ENCODE measurements at regions of chr6 and their contacts with region 1.

Region 1: GRCh38 chr6:291697-292505 is at the start of gene DUSP22:
- DNase-seq: peak; percentile 50 to 95 (median 81)
- ATAC-seq: peak; percentile 55
- H3K4me3 ChIP-seq: peak within 1 kb of the TSS; percentile 64 to 65
- H3K4me3 Mint-ChIP-seq: peak within 1 kb of the TSS; percentile 95
- H3K27ac ChIP-seq: peak within 1 kb of the TSS; percentile 55 to 85
- H3K27ac Mint-ChIP-seq: peak within 1 kb of the TSS; percentile 98
- H3K4me1 ChIP-seq: peaks cover 26% of the 10 kb centered on the region
- H3K4me1 Mint-ChIP-seq: peaks cover 51% of the 10 kb centered on the region
- H3K27me3 ChIP-seq: no peaks in the 10 kb centered on the region
- H3K27me3 Mint-ChIP-seq: no peaks in the 10 kb centered on the region
- CTCF ChIP-seq: no peak
- total RNA-seq, gene DUSP22: 19.9 to 22.1 TPM

Region 2: DNA sequence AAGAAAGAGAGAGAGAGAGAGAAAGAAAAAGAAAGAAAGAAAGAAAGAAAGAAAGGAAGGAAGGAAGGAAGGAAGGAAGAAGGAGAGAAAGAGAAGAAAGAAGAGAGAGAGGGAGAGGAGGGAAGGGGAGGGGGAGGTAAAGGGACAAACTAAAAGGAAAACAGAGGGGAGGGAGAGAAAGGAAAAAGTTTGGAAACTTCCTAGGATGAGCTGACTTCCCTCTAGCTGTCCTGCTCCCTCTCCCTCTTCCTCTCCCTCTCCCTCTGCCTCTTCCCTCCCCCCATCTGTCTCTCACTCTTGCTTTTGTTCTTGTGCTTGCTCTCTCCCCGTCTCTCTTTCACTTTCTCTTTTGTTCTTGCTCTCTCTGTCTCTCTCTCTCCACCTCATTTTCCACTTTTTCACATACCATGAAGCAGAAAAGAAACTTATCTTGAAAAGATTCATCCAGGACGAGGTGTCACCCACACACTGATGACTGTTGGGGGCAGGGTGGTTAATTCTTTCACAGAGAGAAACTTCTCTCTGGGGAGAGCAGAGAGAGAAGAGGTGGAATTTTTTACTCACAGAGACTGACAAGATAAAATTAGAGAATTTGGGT is 56.0 kb before region 1 on chr6:
- CTCF ChIA-PET with region 1: no interaction called
- POLR2A ChIA-PET with region 1: no interaction called
- intact Hi-C with region 1: loop called (anchors 5 kb)
- DNase-seq: peak in 4 of 9 experiments; percentile 34 to 88 (median 58)
- ATAC-seq: peak; percentile 90
- H3K4me3 ChIP-seq: peak overlapping the region; percentile 33 to 61
- H3K4me3 Mint-ChIP-seq: peak overlapping the region; percentile 76
- H3K27ac ChIP-seq: peak overlapping the region; percentile 44 to 87
- H3K27ac Mint-ChIP-seq: peak overlapping the region; percentile 90
- H3K4me1 ChIP-seq: peaks cover 26% of the 10 kb centered on the region
- H3K4me1 Mint-ChIP-seq: peaks cover 29% of the 10 kb centered on the region
- H3K27me3 ChIP-seq: no peaks in the 10 kb centered on the region
- H3K27me3 Mint-ChIP-seq: no peaks in the 10 kb centered on the region
- CTCF ChIP-seq: no peak

Region 3: DNA sequence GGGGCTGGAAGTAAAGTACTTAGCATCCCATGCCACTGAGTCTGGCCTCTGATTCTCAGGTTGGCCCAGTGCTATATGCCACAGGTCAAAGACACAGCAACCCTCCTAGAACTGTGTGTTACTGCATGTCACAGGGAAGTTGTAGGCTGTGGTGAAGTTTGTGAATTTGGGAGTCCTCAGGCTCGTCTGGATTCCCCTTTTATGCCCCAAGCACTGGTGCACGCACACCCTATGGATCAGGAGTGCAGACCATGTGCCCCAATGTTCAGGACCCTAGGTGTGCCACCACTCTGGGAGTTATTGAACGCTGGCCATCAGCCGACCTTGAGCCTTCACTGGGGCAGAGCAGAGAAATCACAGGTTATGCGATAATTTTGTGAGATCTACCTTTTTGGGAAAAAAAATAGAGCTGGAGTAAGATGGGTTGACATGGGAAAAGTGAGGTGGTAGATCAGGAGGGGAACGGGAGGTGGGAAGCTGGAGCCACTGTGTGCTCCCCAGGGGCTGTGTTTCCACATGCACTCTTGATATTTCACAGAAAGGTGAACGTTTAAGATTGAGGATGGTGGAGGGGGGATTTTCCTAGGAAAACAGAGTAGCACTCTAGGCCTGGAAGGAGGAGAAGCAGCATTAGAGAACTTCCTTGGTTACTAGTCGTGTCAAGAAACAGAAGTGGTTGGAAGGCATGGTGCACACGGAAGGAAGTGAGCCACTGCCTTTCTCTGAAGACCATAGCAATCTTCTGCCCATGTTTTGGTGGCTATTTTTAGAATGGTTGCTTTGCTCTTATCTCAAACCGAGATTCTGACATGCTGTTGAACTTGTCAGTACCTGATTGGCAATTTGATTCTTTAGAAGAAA is 44.5 kb after region 1 on chr6:
- CTCF ChIA-PET with region 1: interaction called, 3 read pairs
- POLR2A ChIA-PET with region 1: interaction called, 3 read pairs
- intact Hi-C with region 1: loop called (anchors 2 kb)
- DNase-seq: peak in 2 of 9 experiments; percentile 23 to 52
- ATAC-seq: no peak
- H3K4me3 ChIP-seq: no peak overlapping the region
- H3K4me3 Mint-ChIP-seq: peak overlapping the region; percentile 38
- H3K27ac ChIP-seq: peak overlapping the region in 1 of 2 experiments; percentile 9
- H3K27ac Mint-ChIP-seq: peak overlapping the region; percentile 50
- H3K4me1 ChIP-seq: peaks cover 54% of the 10 kb centered on the region
- H3K4me1 Mint-ChIP-seq: peaks cover 53% of the 10 kb centered on the region
- H3K27me3 ChIP-seq: no peaks in the 10 kb centered on the region
- H3K27me3 Mint-ChIP-seq: no peaks in the 10 kb centered on the region
- CTCF ChIP-seq: no peak

Region 4: GRCh38 chr6:446418-447366 is 154.8 kb after region 1 on chr6:
- CTCF ChIA-PET with region 1: no interaction called
- POLR2A ChIA-PET with region 1: no interaction called
- intact Hi-C with region 1: loop called in 1 of 2 experiments (anchors 2 kb)
- DNase-seq: peak in 8 of 9 experiments; percentile 72 to 90 (median 80)
- ATAC-seq: peak; percentile 76
- H3K4me3 ChIP-seq: peak overlapping the region; percentile 37 to 43
- H3K4me3 Mint-ChIP-seq: peak overlapping the region; percentile 71
- H3K27ac ChIP-seq: no peak overlapping the region
- H3K27ac Mint-ChIP-seq: peak overlapping the region; percentile 88
- H3K4me1 ChIP-seq: peaks cover 43% of the 10 kb centered on the region
- H3K4me1 Mint-ChIP-seq: peaks cover 48% of the 10 kb centered on the region
- H3K27me3 ChIP-seq: no peaks in the 10 kb centered on the region
- H3K27me3 Mint-ChIP-seq: no peaks in the 10 kb centered on the region
- CTCF ChIP-seq: no peak

Region 5: DNA sequence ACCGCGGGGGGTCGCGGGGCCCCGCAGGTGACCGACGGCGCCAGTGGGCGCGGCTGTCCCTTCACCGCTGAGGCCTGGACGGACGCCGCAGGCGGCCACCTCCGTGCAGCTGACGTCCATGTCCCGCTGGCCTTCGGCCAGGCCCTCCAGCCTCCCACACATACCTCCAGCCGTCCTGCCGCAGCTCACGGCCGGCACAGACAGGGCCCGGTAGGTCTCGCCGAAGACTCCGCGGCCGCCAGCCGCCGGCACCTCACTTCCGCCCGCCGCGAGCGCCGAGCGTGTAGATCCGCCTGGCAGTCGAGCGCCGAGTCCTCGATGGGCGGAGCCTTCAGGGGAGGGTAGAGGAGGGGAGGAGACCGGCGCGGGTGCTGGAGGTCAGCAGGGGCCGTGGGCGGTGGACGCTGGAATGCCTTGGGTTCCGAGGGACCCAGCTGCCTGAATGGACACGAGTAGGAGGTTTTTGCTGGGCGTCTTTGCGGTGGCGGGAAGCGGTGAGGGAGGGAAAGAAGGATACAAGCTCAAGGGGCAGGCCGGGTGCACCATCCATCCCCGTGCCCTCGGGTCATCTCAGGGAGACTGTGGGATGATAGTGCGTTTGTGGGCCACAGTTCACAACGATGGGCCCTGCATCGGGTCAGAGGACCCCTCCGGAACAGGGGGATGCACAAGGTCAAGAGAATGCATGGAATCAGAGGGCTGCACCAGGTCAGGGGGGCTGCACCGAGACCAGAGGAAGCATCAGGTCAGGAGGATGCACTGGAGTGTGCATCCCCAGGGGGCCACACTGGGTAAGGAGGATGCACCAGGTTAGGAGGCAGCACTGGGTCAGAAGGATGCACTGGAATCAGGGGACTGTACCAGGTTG is 401.2 kb after region 1 on chr6 and contains the start of gene EXOC2:
- CTCF ChIA-PET with region 1: no interaction called
- POLR2A ChIA-PET with region 1: no interaction called
- intact Hi-C with region 1: loop called (anchors 5 to 10 kb)
- DNase-seq: peak; percentile 67 to 89 (median 83)
- ATAC-seq: peak; percentile 77
- H3K4me3 ChIP-seq: peak within 1 kb of the TSS; percentile 72 to 89
- H3K4me3 Mint-ChIP-seq: peak within 1 kb of the TSS; percentile 95
- H3K27ac ChIP-seq: peak within 1 kb of the TSS; percentile 79 to 88
- H3K27ac Mint-ChIP-seq: peak within 1 kb of the TSS; percentile 95
- H3K4me1 ChIP-seq: peaks cover 19% of the 10 kb centered on the region
- H3K4me1 Mint-ChIP-seq: peaks cover 26% of the 10 kb centered on the region
- H3K27me3 ChIP-seq: no peaks in the 10 kb centered on the region
- H3K27me3 Mint-ChIP-seq: no peaks in the 10 kb centered on the region
- CTCF ChIP-seq: no peak
- total RNA-seq, gene EXOC2: 19.3 to 21.2 TPM

Region 6: DNA sequence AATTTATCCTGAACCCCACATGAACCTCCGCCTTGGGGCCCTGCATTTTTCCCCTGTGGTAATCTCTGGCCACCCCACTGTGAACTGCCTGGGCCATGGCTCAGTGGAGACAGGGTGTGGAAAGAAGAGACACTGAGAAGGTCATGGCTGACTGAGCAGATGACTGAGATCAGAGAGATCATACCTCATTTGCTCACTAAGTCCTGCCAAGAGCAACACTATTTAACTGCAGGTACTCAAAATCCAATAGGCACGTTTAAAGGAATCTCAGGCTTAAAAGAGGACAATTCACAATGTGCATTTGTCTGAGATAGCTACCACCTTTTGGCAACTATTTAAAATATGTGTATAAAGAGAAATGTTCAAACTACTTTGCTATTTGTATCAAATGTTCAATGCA is 1648.5 kb after region 1 on chr6:
- CTCF ChIA-PET with region 1: no interaction called
- POLR2A ChIA-PET with region 1: no interaction called
- intact Hi-C with region 1: no loop called
- DNase-seq: no peak
- ATAC-seq: no peak
- H3K4me3 ChIP-seq: no peak overlapping the region
- H3K4me3 Mint-ChIP-seq: no peak overlapping the region
- H3K27ac ChIP-seq: no peak overlapping the region
- H3K27ac Mint-ChIP-seq: no peak overlapping the region
- H3K4me1 ChIP-seq: no peaks in the 10 kb centered on the region
- H3K4me1 Mint-ChIP-seq: no peaks in the 10 kb centered on the region
- H3K27me3 ChIP-seq: no peaks in the 10 kb centered on the region
- H3K27me3 Mint-ChIP-seq: no peaks in the 10 kb centered on the region
- CTCF ChIP-seq: no peak

Measured in CD8-positive, alpha-beta T cell (primary cell).